ENCODE measurements at regions of chr1 and their contacts with region 1.

Region 1: DNA sequence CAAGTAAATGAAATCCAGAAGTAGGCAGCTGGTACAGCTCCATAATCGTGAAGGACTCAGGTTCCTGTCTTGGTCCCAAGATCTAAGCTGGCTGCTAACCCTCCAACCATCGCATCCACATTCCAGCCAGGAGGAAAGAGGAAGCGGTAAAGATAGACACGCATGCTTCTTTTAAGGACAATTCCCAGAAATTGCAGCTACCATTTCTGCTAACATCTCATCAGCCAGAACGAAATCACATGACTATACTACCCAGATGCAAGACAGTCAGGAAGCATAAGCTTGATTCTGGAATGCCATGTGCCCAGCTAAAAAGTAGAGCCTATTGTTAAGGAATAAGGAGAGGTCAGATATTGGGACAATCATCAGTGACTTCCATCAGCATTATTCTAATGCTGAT is 110.4 kb downstream of the EPHB2 start:
- DNase-seq: peak; percentile 58
- H3K4me3 ChIP-seq: no peak overlapping the region
- H3K27ac ChIP-seq: peak overlapping the region; percentile 67
- H3K4me1 ChIP-seq: peaks cover 21% of the 10 kb centered on the region
- H3K27me3 ChIP-seq: no peaks in the 10 kb centered on the region
- CTCF ChIP-seq: no peak
- POLR2A ChIP-seq: no peak

Region 2: DNA sequence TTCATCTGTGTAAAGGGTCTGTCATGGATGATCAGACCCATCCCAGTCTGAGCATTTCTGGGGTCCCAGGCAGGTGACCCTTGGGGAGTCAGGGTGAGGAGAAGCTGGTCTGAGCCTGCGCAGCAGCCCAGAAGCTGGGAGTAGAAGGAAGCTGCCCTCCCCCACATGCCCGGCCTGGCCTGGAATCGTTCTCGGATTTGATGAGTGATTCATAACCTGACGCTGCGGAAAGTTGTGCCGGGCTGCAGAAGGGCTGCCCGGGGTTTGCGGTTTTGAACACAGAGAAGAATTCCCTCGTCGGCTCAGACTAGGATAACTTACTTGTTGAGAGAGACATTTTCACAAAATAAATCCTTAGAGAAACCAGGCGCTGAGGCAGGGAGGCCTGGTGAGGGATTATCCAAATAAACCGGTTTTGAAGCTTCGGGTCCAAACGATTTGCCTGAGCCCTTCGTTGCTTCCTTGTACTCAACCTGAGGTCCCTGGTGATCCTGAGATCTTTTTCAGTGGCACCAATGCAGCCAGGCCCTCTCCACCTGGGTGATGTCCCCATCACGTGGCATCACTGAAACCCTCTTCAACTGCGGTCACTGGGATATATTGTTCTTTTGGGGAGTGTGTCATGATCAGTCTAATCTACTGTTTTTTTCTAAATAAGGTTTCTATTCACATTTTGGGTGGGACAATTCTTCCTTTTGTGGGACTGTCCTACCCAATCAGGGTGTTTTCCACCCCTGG is 81.2 kb before region 1 on chr1:
- CTCF ChIA-PET with region 1: no interaction called
- POLR2A ChIA-PET with region 1: no interaction called
- dilution Hi-C with region 1: no loop called
- intact Hi-C with region 1: loop called (anchors 5 kb)
- DNase-seq: peak; percentile 81
- H3K4me3 ChIP-seq: no peak overlapping the region
- H3K27ac ChIP-seq: peak overlapping the region; percentile 78
- H3K4me1 ChIP-seq: peaks cover 52% of the 10 kb centered on the region
- H3K27me3 ChIP-seq: no peaks in the 10 kb centered on the region
- CTCF ChIP-seq: no peak
- POLR2A ChIP-seq: no peak

Region 3: DNA sequence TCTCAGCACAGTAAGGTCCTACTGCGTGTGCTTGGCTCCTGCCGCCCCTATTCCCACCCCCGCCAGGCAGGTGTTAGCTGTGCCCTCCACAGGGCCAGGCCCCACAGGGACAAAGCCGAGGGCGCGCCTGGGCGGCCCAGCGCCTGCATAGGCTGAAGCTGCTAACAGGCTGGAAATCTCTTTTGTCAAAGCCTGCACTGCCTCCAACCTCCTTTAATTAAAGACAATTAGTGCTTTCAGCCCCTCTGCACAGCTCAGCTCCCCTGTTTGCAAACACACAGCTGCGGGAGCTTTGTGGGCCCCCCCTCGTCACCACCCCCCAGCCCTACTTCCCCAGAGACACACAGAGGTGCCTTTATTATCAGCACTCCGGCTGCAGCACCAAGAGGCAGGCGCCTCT is 14.4 kb before region 1 on chr1:
- CTCF ChIA-PET with region 1: no interaction called
- POLR2A ChIA-PET with region 1: no interaction called
- dilution Hi-C with region 1: no loop called
- intact Hi-C with region 1: no loop called
- DNase-seq: no peak
- H3K4me3 ChIP-seq: no peak overlapping the region
- H3K27ac ChIP-seq: no peak overlapping the region
- H3K4me1 ChIP-seq: no peaks in the 10 kb centered on the region
- H3K27me3 ChIP-seq: no peaks in the 10 kb centered on the region
- CTCF ChIP-seq: no peak
- POLR2A ChIP-seq: no peak